CD8-positive, alpha-beta T cell (primary cell): ENCODE measurements at regions of chr1 and their contacts with region 1.

Region 1: DNA sequence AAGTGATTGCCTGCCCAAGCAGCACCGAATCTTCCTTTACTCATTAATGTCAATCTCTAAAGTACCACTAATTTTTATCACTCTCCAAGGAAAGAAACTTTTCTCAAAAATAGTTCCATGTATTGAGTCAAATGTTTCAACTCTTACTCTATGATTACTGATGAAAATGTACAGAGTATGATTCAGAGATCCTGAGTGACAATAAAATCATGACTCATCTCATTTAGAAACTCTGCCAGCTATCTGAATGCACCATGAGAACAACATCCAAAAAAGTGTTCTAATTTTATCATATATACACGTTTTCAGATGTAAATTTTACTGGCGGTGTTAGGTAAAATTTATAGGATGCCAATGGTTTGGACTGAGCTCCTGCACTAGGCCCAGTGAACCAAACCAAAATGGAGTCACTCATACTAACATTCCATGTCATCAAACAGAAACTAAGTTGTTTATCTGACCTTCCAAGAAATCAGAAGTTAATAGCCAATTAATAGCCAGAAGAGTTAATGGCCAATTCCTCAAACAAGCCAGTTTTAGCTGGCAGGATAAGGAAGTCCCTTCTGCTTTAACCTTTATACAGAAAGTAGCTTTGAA is 22.6 kb downstream of the PLPPR5 start:
- DNase-seq: no peak
- ATAC-seq: no peak
- H3K4me3 ChIP-seq: no peak overlapping the region
- H3K4me3 Mint-ChIP-seq: no peak overlapping the region
- H3K27ac ChIP-seq: no peak overlapping the region
- H3K27ac Mint-ChIP-seq: no peak overlapping the region
- H3K4me1 ChIP-seq: no peaks in the 10 kb centered on the region
- H3K4me1 Mint-ChIP-seq: no peaks in the 10 kb centered on the region
- H3K27me3 ChIP-seq: no peaks in the 10 kb centered on the region
- H3K27me3 Mint-ChIP-seq: no peaks in the 10 kb centered on the region
- CTCF ChIP-seq: no peak

Region 2: DNA sequence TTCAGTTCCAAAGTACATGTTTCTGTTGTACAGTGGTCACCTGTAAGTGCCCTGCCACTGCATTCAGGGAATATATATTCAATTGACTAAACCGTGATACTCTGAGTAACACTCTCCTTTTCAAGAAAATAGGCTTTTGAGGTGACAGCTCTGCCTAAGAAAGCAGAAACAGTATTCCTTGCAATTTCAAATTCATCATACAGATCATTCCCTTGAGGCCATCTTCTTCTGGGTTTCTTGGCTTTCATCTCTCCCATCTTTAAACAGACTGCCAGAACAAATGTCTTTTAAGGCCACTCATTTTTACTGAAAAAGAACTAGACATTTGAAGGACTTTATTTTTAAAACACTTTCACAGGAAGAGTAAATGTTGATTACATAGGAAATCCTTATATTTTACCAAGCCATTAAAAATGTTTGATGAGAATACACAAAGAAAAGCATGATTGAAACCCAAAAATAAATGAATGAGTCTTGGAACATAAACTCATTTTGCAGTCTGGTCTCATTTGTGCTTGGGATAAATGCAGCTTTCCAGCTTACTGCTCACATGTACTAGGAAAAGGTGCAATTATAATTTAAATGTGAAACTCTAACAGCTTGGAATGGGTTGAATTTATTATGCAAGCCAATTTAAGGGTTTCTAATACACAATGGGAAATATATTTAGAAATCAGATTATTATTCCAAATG is 12.1 kb before region 1 on chr1:
- CTCF ChIA-PET with region 1: no interaction called
- POLR2A ChIA-PET with region 1: no interaction called
- intact Hi-C with region 1: loop called in 1 of 2 experiments (anchors 1 kb)
- DNase-seq: no peak
- ATAC-seq: no peak
- H3K4me3 ChIP-seq: no peak overlapping the region
- H3K4me3 Mint-ChIP-seq: no peak overlapping the region
- H3K27ac ChIP-seq: no peak overlapping the region
- H3K27ac Mint-ChIP-seq: no peak overlapping the region
- H3K4me1 ChIP-seq: no peaks in the 10 kb centered on the region
- H3K4me1 Mint-ChIP-seq: no peaks in the 10 kb centered on the region
- H3K27me3 ChIP-seq: no peaks in the 10 kb centered on the region
- H3K27me3 Mint-ChIP-seq: peaks cover 2% of the 10 kb centered on the region
- CTCF ChIP-seq: no peak